ENCODE measurements at regions of chr13 and their contacts with region 1.

Region 1: GRCh38 chr13:99307648-99308339 is 595 bp upstream of the GPR183 start:
- DNase-seq: peak; percentile 87
- H3K4me3 Mint-ChIP-seq: peak overlapping the region; percentile 84
- H3K27ac Mint-ChIP-seq: peak overlapping the region; percentile 88
- H3K4me1 Mint-ChIP-seq: peaks cover 73% of the 10 kb centered on the region
- H3K27me3 Mint-ChIP-seq: no peaks in the 10 kb centered on the region

Region 2: DNA sequence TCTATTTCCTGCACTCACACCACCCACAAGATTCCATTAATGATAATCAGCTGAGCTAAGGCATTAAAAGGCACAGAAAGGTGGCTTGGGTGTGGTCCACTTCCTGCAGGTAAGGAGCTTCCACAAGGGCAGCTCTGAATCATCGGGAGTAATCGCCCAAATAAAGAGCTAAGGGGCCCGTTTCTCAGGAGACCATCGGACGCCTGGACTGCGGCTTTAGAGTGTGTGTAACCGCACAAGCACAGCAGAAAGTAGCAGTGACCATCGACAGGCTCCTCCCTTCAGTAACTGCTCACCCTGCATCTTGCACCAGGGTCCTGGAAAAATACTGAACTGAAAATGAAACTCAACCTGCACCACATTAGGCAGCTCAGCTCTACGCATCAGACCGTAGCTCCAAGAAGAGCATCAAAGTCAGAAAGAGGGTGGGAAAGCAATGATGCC is 736.8 kb before region 1 on chr13:
- intact Hi-C with region 1: loop called (anchors 5 kb)
- DNase-seq: peak; percentile 86
- H3K4me3 Mint-ChIP-seq: peak overlapping the region; percentile 80
- H3K27ac Mint-ChIP-seq: peak overlapping the region; percentile 90
- H3K4me1 Mint-ChIP-seq: peaks cover 87% of the 10 kb centered on the region
- H3K27me3 Mint-ChIP-seq: no peaks in the 10 kb centered on the region

Region 3: DNA sequence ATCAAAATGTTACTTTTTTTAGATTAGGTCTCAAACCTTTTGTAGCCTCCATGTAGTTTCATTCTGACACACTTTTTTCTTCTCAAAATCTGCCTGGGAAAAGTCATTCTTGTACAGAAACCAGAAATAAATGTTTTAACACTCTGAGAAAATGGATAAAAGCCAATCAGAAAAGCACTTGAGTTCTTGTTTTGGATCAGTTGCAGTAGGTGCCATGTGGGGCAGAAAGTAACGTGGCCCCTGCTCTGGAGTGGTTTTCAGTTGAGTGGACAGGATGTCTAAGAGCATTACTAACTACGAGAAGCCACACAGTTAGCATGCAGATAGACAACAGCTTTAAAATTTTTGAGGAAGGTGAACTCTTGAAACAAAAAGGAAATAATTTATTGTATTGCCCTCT is 19.7 kb before region 1 on chr13:
- intact Hi-C with region 1: loop called (anchors 1 kb)
- DNase-seq: no peak
- H3K4me3 Mint-ChIP-seq: peak overlapping the region; percentile 55
- H3K27ac Mint-ChIP-seq: peak overlapping the region; percentile 86
- H3K4me1 Mint-ChIP-seq: peaks cover 59% of the 10 kb centered on the region
- H3K27me3 Mint-ChIP-seq: no peaks in the 10 kb centered on the region

Region 4: GRCh38 chr13:99296398-99296797 is 11.4 kb before region 1 on chr13:
- intact Hi-C with region 1: loop called (anchors 1 kb)
- DNase-seq: no peak
- H3K4me3 Mint-ChIP-seq: peak overlapping the region; percentile 68
- H3K27ac Mint-ChIP-seq: peak overlapping the region; percentile 79
- H3K4me1 Mint-ChIP-seq: peaks cover 58% of the 10 kb centered on the region
- H3K27me3 Mint-ChIP-seq: no peaks in the 10 kb centered on the region

Region 5: GRCh38 chr13:99386911-99387788 is 79.4 kb after region 1 on chr13:
- intact Hi-C with region 1: loop called (anchors 2 kb)
- DNase-seq: peak; percentile 94
- H3K4me3 Mint-ChIP-seq: no peak overlapping the region
- H3K27ac Mint-ChIP-seq: peak overlapping the region; percentile 62
- H3K4me1 Mint-ChIP-seq: peaks cover 46% of the 10 kb centered on the region
- H3K27me3 Mint-ChIP-seq: no peaks in the 10 kb centered on the region

Region 6: DNA sequence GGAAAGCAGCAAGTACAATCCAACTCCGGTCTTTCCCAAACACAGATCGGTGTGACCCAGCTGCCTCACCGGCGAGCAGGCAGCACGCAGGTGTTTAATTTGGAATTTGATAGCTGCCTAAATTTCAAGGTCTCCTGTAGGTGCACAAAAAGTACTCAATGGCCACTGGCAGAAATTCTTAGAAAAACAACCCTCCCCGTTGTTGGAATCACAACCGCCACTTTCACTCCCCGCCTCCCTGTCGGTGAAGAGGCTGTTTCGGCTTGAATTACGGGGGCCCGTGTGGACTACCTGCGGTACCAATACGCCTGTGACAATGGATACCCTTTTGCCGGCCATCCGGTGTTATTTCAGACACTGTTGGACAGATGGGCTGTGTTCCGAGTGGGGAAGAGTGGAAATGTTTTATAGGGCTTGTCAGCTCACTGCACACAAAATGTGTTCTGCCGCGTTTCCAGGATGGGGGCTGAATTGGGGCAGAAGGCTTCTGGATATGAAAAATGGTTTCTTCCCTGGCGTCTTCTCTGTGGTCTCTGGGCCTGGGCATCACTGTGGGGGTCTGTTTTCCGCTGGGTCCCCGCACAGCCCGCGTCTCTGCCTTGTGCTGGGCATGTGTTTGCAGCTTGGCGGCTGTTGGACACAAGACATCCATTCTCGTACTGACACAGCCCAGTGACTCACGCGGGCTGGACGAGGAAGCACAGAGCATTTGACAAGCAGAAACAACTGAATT is 618.4 kb after region 1 on chr13:
- intact Hi-C with region 1: no loop called
- DNase-seq: no peak
- H3K4me3 Mint-ChIP-seq: no peak overlapping the region
- H3K27ac Mint-ChIP-seq: no peak overlapping the region
- H3K4me1 Mint-ChIP-seq: peaks cover 5% of the 10 kb centered on the region
- H3K27me3 Mint-ChIP-seq: peaks cover 11% of the 10 kb centered on the region

Measured in activated CD4-positive, alpha-beta T cell treated with anti-CD3 and anti-CD28 coated beads, Interleukin-2, amount 10 ng/mL, durations not matched to agents 24 days and 14 days (primary cell).